Gastrocnemius medialis (tissue), 4 donors: ENCODE measurements at regions of chr12 and their contacts with region 1.

Region 1: GRCh38 chr12:93813972-93814821 is 137.0 kb downstream of the CRADD start:
- DNase-seq: peak; percentile 95
- ATAC-seq: peak; percentile 93 to 96
- H3K4me3 ChIP-seq: peak overlapping the region; percentile 39 to 45 (median 42)
- H3K27ac ChIP-seq: peak overlapping the region; percentile 90 to 97 (median 96)
- H3K4me1 ChIP-seq: peaks cover 30 to 63% of the 10 kb centered on the region in 2 donors
- H3K27me3 ChIP-seq: no peaks in the 10 kb centered on the region
- CTCF ChIP-seq: peak in 4 of 5 experiments; percentile 12 to 22 (median 16)
- POLR2A ChIP-seq: peak in 1 of 2 donors; percentile 27

Region 2: GRCh38 chr12:92928962-92929915 is 885.0 kb before region 1 on chr12 and contains the start of gene EEA1:
- in situ Hi-C with region 1: no loop called
- intact Hi-C with region 1: loop called (anchors 5 kb)
- DNase-seq: peak; percentile 96 to 97
- ATAC-seq: peak; percentile 83 to 84
- H3K4me3 ChIP-seq: peak within 1 kb of the TSS; percentile 69 to 92 (median 86)
- H3K27ac ChIP-seq: peak within 1 kb of the TSS; percentile 94 to 100 (median 99)
- H3K4me1 ChIP-seq: peaks cover 39 to 41% of the 10 kb centered on the region in 2 donors
- H3K27me3 ChIP-seq: no peaks in the 10 kb centered on the region
- CTCF ChIP-seq: peak in 4 of 5 experiments; percentile 11 to 45 (median 40)
- POLR2A ChIP-seq: peak; percentile 94 to 97
- total RNA-seq, gene EEA1: 18.6 to 28.7 (median 20.8) TPM

Region 3: DNA sequence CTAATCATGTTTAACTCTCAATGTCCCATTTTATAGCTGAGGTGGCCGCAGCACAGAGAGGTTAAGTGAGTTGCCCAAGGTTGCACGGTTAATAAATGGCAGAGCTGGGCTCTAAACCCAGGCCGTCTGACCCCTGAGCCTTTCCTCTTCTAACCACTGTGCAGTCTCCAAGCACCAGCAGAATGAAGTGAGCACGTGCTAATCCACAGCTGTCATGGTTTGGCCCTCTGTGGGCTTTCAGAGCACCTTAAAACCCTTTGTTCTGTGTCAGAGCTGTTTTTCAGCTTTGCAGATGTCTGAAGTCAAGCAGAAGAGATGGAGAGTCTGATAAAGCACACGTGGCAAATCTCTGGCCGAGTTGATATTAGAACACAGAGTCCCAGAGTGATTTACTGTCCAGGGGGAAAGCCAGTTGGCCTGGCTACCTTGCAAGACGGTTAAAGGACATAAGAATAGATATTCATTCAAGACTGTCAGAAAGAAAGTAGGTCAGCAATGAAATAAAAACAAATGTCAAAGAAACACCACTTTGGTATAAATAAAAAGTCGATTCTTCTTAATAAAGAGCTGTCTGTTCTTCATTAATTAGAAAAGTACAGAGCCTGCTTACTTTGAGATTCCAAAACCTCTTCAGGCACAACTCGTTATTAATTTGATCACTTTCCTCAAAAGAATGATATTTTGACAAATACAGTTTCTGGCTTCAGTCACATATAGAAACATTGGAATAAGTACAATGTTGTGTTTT is 29.7 kb before region 1 on chr12:
- in situ Hi-C with region 1: no loop called
- intact Hi-C with region 1: loop called (anchors 1 kb)
- DNase-seq: peak; percentile 86 to 91
- ATAC-seq: peak; percentile 97 to 98
- H3K4me3 ChIP-seq: peak overlapping the region; percentile 15 to 35 (median 24)
- H3K27ac ChIP-seq: peak overlapping the region; percentile 82 to 93 (median 87)
- H3K4me1 ChIP-seq: peaks cover 41 to 45% of the 10 kb centered on the region in 2 donors
- H3K27me3 ChIP-seq: no peaks in the 10 kb centered on the region
- CTCF ChIP-seq: no peak
- POLR2A ChIP-seq: peak in 1 of 2 donors; percentile 21

Region 4: DNA sequence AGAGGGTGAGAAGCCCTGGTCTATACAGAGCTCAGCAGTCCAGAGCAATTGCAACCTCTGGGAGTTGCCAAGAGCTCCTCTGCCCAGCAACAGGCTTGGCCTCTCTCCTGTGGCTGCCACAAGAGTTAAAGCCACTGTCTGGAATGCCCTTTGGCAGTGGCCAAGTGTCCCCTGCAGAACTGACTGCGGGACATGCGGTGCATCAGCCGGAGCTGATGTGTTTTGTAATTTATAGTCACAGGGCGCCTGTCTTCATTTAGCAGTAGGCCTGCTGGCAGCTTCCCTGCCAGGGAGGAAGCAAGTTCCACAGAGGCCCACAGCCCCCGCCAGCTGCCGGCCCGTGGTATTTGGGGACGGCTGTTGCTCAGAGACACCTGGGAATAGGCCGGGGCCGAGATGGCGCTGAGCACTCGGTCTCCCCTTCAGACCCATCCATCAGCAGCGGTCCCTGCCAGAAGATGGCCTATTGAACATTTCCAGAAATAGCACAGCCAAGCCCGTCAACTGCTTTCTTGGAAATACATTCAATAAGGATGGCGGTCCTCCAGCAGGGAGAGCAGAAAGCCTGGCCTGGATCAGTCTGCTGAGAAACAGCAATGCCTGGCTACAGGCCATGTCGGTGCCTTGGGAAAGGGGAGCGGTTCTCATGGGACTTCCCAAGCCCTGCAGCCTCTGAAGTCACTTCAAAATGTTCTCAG is 80.3 kb after region 1 on chr12:
- in situ Hi-C with region 1: loop called in 1 of 4 experiments (anchors 10 kb)
- intact Hi-C with region 1: loop called (anchors 1 kb)
- DNase-seq: peak; percentile 91 to 96
- ATAC-seq: peak; percentile 89 to 95
- H3K4me3 ChIP-seq: peak overlapping the region; percentile 19 to 30 (median 26)
- H3K27ac ChIP-seq: peak overlapping the region; percentile 87 to 89 (median 88)
- H3K4me1 ChIP-seq: peaks cover 28% of the 10 kb centered on the region in 2 donors
- H3K27me3 ChIP-seq: no peaks in the 10 kb centered on the region
- CTCF ChIP-seq: no peak
- POLR2A ChIP-seq: peak in 1 of 2 donors; percentile 44

Region 5: GRCh38 chr12:93943766-93944165 is 129.6 kb after region 1 on chr12:
- in situ Hi-C with region 1: no loop called
- intact Hi-C with region 1: loop called (anchors 5 kb)
- DNase-seq: peak; percentile 75 to 87
- ATAC-seq: peak; percentile 99 to 100
- H3K4me3 ChIP-seq: no peak overlapping the region
- H3K27ac ChIP-seq: peak overlapping the region; percentile 63 to 81 (median 72)
- H3K4me1 ChIP-seq: peaks cover 6 to 9% of the 10 kb centered on the region in 2 donors
- H3K27me3 ChIP-seq: no peaks in the 10 kb centered on the region
- CTCF ChIP-seq: peak; percentile 34 to 49 (median 42)
- POLR2A ChIP-seq: peak in 1 of 2 donors; percentile 41

Region 6: DNA sequence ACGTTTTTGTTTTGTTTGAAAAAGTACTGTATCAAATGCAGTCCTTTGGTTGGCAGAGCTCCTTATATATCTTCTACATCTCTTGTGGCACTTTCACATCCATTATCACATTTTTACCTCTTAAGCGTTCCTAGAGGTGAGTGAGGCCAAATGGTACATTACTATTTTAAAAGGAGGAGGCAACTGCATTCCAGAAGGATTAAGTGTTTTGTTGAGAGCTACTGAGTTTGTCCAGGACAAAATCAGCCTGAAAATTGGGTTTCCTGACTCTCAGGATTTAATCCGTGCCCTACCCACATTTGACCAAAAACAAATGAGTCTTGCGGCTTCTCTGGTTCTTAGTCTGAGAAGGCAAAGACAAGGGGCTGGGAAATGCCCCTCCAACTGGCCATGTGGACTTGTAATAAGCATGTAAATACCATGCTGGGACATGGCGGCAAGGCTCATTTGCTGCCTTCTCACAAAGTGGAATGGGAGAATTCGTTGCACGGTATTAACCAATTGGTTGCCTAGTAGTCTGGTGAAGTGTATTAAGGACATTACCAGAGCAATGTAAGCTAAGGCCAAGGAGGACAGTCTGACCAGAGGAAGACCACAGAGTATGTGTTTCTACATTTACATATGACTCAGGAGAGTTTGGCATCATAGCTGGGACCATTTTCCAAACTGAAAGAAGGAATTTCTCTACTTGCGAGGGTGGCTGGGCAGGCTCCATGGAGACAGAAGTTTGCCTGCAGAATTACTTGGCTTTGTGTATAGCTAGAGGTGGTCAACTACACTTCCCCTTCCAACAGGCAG is 158.4 kb after region 1 on chr12:
- in situ Hi-C with region 1: no loop called
- intact Hi-C with region 1: loop called (anchors 5 kb)
- DNase-seq: no peak
- ATAC-seq: peak; percentile 12 to 30
- H3K4me3 ChIP-seq: no peak overlapping the region
- H3K27ac ChIP-seq: peak overlapping the region in 1 of 4 donors; percentile 45
- H3K4me1 ChIP-seq: peaks cover 26 to 32% of the 10 kb centered on the region in 2 donors
- H3K27me3 ChIP-seq: no peaks in the 10 kb centered on the region
- CTCF ChIP-seq: no peak
- POLR2A ChIP-seq: no peak